Activated CD4-positive, alpha-beta T cell treated with anti-CD3 and anti-CD28 coated beads for 36 hours (primary cell): ENCODE measurements at regions of chr17 and their contacts with region 1.

Region 1: DNA sequence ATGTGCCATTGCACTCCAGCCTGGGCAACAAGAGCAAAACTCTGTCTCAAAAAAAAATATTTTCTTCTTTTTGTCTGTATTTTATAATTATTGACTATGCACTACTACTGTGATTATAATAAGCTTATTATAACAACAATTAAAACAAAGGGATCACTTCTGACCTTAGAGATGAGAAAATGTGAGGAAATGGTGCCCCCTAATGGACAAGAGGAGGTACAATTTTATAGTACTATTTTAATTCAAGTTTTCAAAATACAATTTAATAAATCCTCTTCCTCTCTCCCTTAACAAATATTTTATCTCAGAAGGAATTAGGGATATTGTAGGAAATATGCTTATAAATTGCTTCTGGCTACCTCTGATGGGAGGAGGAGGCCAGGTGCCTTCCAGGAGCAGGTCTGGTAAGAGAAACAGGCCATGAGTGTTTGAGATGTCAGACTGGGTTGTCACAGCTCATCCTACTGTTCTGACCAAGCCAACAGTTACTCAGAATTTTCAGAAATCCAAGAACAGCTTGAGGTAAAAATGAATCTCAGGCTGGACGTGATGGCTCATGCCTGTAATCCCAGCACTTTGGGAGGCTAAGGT is 14.0 kb downstream of the VPS53 start:
- DNase-seq: no peak
- ATAC-seq: peak; percentile 65
- H3K4me3 Mint-ChIP-seq: no peak overlapping the region
- H3K27ac Mint-ChIP-seq: no peak overlapping the region
- H3K4me1 Mint-ChIP-seq: no peaks in the 10 kb centered on the region
- H3K27me3 Mint-ChIP-seq: no peaks in the 10 kb centered on the region

Region 2: GRCh38 chr17:143782-144281 is 556.8 kb before region 1 on chr17:
- CTCF ChIA-PET with region 1: interaction called, 3 read pairs
- POLR2A ChIA-PET with region 1: no interaction called
- intact Hi-C with region 1: loop called in 1 of 2 experiments (anchors 2 kb)
- DNase-seq: peak; percentile 93
- ATAC-seq: peak; percentile 87
- H3K4me3 Mint-ChIP-seq: no peak overlapping the region
- H3K27ac Mint-ChIP-seq: no peak overlapping the region
- H3K4me1 Mint-ChIP-seq: no peaks in the 10 kb centered on the region
- H3K27me3 Mint-ChIP-seq: no peaks in the 10 kb centered on the region

Region 3: DNA sequence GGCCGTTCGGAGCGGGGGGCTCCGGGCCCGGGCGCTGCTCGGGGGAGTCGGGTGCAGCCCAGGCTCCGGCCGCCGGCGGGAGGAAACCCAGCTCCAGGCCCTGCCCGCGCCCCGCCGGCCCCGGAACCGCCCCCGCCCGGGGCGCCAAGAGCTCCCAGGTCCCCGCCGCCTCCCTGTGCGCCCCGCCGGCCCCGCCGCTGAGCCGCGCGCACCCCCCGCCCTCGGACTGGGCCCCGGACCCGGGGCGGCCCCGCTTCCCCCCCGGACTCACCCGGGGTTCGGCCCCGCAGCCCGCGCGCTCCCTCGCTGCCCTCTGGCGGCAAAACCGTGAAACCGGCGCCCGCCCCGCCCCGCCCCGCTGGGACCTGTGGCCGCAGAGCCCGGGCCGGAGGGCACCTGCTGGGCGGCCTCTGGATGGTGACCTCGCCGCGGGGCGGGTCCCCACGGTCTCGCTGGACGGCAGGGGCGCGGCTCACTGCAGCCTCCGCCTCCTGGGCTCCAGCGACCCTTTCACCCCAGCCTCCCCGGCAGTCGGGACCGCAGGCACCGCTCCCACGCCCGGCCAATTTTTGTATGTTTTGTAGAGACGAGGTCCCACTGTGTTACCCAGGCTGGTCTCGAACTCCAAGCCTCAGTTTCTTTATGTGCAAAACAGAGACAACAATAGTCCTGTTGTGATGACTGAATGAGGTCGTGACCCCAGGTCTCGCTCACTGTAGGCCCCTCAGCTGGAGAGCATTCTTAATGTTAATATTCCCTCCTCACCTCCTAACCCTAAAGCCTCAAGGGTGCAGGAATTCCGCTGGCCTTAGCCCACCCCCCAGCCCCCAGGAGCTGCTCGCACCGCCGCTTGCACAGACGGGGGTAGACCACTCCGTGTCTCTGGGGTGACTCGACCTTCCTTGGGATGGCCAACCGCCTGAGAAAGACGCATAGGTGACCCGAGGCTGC is 314.4 kb before region 1 on chr17:
- CTCF ChIA-PET with region 1: interaction called, 4 read pairs
- POLR2A ChIA-PET with region 1: no interaction called
- intact Hi-C with region 1: loop called in 1 of 2 experiments (anchors 10 kb)
- DNase-seq: peak; percentile 82
- ATAC-seq: peak; percentile 63
- H3K4me3 Mint-ChIP-seq: peak overlapping the region; percentile 70
- H3K27ac Mint-ChIP-seq: no peak overlapping the region
- H3K4me1 Mint-ChIP-seq: peaks cover 7% of the 10 kb centered on the region
- H3K27me3 Mint-ChIP-seq: peaks cover 15% of the 10 kb centered on the region

Region 4: DNA sequence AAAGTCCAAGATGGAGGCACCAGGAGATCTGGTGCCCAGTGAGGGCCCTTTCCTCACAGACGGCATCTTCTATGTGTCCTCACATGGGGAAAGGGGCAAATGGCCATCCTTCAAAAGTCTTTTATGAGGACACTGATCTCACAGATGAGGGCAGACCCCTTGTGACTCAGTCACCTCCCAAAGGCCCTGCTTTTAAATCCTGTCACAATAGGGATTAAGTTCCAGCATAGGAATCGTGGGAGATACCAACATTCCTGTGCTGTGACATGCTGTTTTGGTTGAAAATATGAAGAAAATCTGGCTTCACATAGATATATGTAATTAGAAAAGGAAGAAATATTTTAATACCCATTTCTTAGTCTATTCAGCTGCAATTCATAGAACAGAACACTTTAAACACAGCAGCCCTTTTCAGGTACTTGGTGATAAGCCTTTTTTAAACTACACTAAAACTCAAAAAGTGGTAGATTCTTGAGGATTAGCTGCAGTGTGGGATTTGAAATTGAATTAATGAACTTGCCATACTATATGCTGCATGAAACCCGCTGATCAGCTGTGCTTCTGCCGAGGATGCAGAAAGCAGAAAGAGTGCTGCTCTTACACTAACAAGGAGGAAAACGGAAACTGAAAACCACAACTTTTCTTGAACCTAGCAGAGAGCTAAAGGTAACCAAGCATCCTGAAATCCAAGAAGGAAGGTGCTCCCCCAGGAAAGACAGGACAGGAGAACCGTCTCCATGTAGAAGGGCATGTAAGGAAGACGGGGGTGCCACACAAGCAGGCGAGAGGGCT is 18.7 kb before region 1 on chr17:
- CTCF ChIA-PET with region 1: interaction called, 11 read pairs
- POLR2A ChIA-PET with region 1: no interaction called
- intact Hi-C with region 1: no loop called
- DNase-seq: no peak
- ATAC-seq: no peak
- H3K4me3 Mint-ChIP-seq: no peak overlapping the region
- H3K27ac Mint-ChIP-seq: no peak overlapping the region
- H3K4me1 Mint-ChIP-seq: peaks cover 21% of the 10 kb centered on the region
- H3K27me3 Mint-ChIP-seq: no peaks in the 10 kb centered on the region

Region 5: GRCh38 chr17:716238-716637 is 15.6 kb after region 1 on chr17:
- CTCF ChIA-PET with region 1: interaction called, 19 read pairs
- POLR2A ChIA-PET with region 1: no interaction called
- intact Hi-C with region 1: no loop called
- DNase-seq: no peak
- ATAC-seq: no peak
- H3K4me3 Mint-ChIP-seq: no peak overlapping the region
- H3K27ac Mint-ChIP-seq: no peak overlapping the region
- H3K4me1 Mint-ChIP-seq: peaks cover 26% of the 10 kb centered on the region
- H3K27me3 Mint-ChIP-seq: no peaks in the 10 kb centered on the region